AG04449 (cell line): ENCODE measurements at regions of chr9 and their contacts with region 1.

Region 1: DNA sequence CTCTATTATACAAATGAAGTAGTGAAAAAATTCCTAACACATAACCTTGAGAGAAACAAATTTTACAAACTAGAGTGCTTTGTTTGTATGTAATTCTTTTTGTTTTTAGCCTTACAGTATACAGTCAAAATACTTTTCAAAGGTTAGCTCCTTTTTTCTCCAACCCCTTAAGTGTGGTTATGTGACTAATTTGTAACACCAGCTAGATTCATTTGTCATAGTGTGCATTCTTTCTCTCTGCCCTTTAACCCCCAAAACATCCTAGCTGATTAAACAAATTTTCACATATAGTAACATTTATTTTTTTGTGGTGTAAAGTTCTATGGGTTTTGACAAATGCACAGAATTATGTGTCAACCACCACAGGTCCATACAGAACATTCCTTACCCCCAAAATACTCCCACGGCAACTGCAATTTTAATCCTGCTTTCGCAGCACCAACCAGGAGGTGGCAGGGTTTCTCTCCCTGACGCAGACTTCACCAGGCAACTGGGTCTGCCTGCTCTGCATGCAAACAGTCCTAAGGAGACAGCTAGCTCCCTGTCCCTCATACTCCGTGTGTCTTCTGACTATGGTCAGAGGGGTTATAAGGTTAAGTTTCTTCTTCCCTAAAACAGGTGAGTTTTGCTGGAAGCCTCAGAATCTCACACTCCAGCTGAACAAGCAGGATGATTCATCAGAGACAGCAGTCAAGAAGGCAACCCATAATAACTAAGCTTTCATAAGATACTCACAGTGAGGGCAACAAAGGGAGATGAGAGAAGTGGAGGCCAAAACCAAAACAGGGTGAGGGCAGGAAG is 44.5 kb upstream of the NR5A1 start:
- DNase-seq: no peak
- H3K4me3 ChIP-seq: no peak overlapping the region
- CTCF ChIP-seq: peak; percentile 78

Region 2: DNA sequence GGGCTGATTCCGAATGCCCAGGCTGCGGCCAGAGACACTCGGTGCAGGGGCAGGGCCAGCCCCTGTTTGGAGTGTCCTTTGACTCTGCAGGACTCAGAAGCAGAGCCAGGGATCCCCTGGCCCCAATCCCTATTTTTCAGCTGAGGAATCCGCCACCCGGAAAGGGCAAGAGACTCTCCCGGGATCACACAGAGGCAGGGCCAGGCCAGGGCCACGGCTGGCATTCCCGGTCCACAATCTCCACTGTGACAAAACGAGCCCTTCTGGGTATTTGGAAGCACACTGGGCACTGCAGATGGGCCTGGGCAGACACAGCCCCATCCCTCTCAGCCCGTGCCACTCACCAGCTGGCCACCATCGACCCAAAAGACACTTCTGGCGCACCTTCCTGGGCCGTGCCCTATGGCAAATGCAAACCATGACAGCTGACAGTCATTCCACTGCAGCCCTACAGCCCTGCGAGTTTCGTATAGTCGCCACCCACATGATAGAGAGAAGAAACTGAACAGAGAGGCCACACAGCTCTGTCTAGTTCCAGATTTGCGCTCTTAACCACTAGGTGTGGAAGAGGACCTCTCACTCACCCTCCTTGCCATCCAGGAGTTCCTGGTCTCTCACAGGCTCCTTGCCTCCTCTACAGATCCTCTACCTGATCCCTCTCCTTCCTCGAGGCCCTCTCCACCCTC is 57.7 kb before region 1 on chr9:
- CTCF ChIA-PET with region 1: no interaction called
- POLR2A ChIA-PET with region 1: no interaction called
- DNase-seq: no peak
- H3K4me3 ChIP-seq: no peak overlapping the region
- CTCF ChIP-seq: no peak

Region 3: DNA sequence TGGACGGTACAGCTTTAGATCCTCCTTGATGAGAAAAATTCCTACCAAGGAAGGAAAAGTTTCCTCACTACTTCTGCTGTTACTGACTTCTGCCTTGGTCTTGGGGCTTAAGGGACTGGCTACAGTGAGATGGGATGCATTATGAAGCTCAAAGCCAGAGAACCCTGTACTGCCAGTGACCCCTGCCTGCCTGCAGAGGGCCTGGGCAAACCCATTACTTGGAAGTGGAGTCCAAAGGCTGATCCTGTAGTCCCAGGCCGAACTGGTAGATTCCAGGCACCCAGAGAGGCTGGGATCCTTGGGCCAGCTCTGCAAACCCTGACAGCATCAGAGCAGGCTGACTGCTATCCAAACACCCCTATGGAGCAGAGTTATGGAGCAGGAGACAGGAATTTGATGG is 18.8 kb before region 1 on chr9:
- CTCF ChIA-PET with region 1: interaction called, 206 read pairs
- POLR2A ChIA-PET with region 1: no interaction called
- DNase-seq: no peak
- H3K4me3 ChIP-seq: no peak overlapping the region
- CTCF ChIP-seq: no peak

Region 4: GRCh38 chr9:124567362-124567761 is 15.7 kb after region 1 on chr9:
- CTCF ChIA-PET with region 1: interaction called, 11 read pairs
- POLR2A ChIA-PET with region 1: no interaction called
- DNase-seq: no peak
- H3K4me3 ChIP-seq: no peak overlapping the region
- CTCF ChIP-seq: no peak

Region 5: GRCh38 chr9:124658165-124659017 is 106.7 kb after region 1 on chr9:
- CTCF ChIA-PET with region 1: interaction called, 13 read pairs
- POLR2A ChIA-PET with region 1: interaction called, 3 read pairs
- DNase-seq: peak; percentile 97
- H3K4me3 ChIP-seq: peak overlapping the region; percentile 67
- CTCF ChIP-seq: no peak

Region 6: DNA sequence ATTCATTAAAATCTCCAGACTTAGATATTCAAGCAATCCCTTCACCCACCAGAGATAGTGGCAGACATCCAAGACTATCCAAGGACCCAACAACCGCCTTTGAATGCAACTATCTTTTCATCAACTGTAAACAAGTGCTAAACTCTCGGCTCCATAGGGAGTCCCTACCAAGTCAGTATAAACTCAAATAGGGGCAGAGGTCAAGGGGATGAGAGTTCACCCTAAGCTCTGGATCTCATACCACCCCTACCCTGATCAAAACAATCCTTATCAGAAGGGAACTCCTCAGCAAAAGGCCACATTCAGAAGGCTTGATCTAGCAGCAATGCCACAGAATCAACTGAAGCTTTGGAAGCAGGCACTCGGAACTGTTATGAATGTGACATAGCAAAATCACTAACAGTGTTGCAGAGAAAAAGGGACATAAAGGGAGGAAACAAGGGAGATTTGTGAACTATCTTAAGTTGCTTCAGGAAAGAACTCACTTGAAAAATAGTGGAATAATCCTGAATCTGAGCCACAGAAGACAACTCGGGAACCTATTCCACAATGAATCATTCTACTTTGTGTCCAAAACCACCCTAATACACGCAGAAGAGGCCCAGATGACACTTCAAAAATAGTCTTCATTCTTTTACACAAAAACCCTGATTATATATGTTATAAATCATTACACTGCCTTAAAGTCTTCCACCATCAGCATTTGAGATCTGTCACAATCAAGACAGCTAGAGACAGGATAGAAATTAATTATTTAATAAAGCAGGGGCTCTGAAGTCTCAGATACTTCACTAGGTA is 169.6 kb after region 1 on chr9:
- CTCF ChIA-PET with region 1: interaction called, 119 read pairs
- POLR2A ChIA-PET with region 1: no interaction called
- DNase-seq: no peak
- H3K4me3 ChIP-seq: no peak overlapping the region
- CTCF ChIP-seq: no peak

Region 7: DNA sequence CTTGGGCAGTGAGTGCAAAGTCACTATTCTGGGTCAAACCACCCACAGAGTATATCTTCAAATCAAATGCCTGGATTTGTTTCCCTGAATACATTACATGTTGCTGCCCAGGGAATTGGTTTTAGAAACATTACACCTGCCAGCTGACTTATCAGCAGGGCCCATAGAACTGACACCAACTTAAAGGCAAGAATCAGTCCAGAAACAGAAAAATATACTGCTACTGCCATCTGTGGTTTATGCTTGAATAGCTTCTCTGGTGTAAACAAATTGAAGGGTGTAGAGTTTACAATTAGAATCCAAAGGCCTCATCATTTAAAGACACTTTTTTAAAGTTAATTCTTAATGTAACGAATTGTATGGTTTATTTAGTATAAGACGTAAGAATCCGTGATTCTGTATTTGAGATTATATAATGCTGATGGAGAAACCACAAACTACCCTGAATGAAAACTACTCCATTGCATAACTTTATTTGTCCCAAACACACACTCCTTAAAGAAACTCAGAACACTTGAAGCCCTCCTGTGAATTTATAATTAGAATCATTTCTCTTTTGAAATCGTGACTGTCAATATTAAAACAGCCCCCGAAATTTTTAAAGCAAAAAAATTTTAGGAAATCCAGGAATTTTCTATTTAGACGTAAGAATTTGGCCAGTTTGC is 213.2 kb after region 1 on chr9:
- CTCF ChIA-PET with region 1: interaction called, 30 read pairs
- POLR2A ChIA-PET with region 1: no interaction called
- DNase-seq: no peak
- H3K4me3 ChIP-seq: no peak overlapping the region
- CTCF ChIP-seq: peak; percentile 20